Activated CD4-positive, alpha-beta memory T cell treated with anti-CD3 and anti-CD28 coated beads for 36 hours (primary cell): ENCODE measurements at regions of chr11 and their contacts with region 1.

Region 1: GRCh38 chr11:8092587-8093424 is 11.8 kb downstream of the TUB start:
- DNase-seq: peak; percentile 72
- H3K4me3 Mint-ChIP-seq: no peak overlapping the region
- H3K27ac Mint-ChIP-seq: no peak overlapping the region
- H3K4me1 Mint-ChIP-seq: no peaks in the 10 kb centered on the region
- H3K27me3 Mint-ChIP-seq: no peaks in the 10 kb centered on the region

Region 2: GRCh38 chr11:7833527-7833926 is 259.3 kb before region 1 on chr11:
- CTCF ChIA-PET with region 1: no interaction called
- POLR2A ChIA-PET with region 1: no interaction called
- intact Hi-C with region 1: no loop called
- DNase-seq: no peak
- H3K4me3 Mint-ChIP-seq: no peak overlapping the region
- H3K27ac Mint-ChIP-seq: no peak overlapping the region
- H3K4me1 Mint-ChIP-seq: no peaks in the 10 kb centered on the region
- H3K27me3 Mint-ChIP-seq: peaks cover 2% of the 10 kb centered on the region

Region 3: GRCh38 chr11:8018484-8019313 is 74.1 kb before region 1 on chr11:
- CTCF ChIA-PET with region 1: interaction called, 10 read pairs
- POLR2A ChIA-PET with region 1: no interaction called
- intact Hi-C with region 1: no loop called
- DNase-seq: peak; percentile 78
- H3K4me3 Mint-ChIP-seq: peak overlapping the region; percentile 62
- H3K27ac Mint-ChIP-seq: no peak overlapping the region
- H3K4me1 Mint-ChIP-seq: peaks cover 12% of the 10 kb centered on the region
- H3K27me3 Mint-ChIP-seq: peaks cover 22% of the 10 kb centered on the region

Region 4: GRCh38 chr11:8080674-8081590 is 11.9 kb before region 1 on chr11 and contains the start of gene TUB:
- CTCF ChIA-PET with region 1: interaction called, 105 read pairs
- POLR2A ChIA-PET with region 1: no interaction called
- intact Hi-C with region 1: no loop called
- DNase-seq: peak; percentile 13
- H3K4me3 Mint-ChIP-seq: peak within 1 kb of the TSS; percentile 50
- H3K27ac Mint-ChIP-seq: no peak within 1 kb of the TSS
- H3K4me1 Mint-ChIP-seq: peaks cover 9% of the 10 kb centered on the region
- H3K27me3 Mint-ChIP-seq: peaks cover 40% of the 10 kb centered on the region
- total RNA-seq, gene TUB: 0.36 to 0.58 TPM

Region 5: DNA sequence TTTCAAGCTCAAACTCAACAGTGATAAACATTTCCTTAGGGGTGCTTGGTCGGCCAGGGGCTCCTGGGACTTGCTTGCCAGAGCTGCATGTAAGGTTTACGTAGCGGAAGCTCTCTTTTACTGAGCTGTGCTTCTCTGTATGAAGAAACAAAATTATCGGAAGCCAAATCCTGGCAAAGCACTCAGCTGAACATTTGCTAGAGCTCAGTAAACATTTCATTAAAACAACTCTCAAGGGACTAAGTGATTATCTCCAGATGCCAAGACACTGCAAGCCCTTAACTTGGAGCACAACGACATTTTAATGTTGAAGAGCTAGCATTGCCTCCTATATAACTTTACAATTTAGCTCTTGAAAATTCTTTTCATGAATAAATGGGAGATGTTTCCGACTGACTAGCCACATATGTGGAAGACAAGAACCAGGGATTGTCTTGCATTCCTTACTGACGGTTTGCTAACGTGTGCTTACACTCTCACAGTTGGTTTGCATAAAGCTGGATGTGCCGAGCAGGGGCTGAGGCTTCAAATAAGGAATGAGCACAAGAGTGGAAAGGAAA is 955.2 kb after region 1 on chr11:
- CTCF ChIA-PET with region 1: no interaction called
- POLR2A ChIA-PET with region 1: no interaction called
- intact Hi-C with region 1: no loop called
- DNase-seq: no peak
- H3K4me3 Mint-ChIP-seq: no peak overlapping the region
- H3K27ac Mint-ChIP-seq: no peak overlapping the region
- H3K4me1 Mint-ChIP-seq: no peaks in the 10 kb centered on the region
- H3K27me3 Mint-ChIP-seq: no peaks in the 10 kb centered on the region